GM10248 (cell line): ENCODE measurements at regions of chr1 and their contacts with region 1.

Region 1: DNA sequence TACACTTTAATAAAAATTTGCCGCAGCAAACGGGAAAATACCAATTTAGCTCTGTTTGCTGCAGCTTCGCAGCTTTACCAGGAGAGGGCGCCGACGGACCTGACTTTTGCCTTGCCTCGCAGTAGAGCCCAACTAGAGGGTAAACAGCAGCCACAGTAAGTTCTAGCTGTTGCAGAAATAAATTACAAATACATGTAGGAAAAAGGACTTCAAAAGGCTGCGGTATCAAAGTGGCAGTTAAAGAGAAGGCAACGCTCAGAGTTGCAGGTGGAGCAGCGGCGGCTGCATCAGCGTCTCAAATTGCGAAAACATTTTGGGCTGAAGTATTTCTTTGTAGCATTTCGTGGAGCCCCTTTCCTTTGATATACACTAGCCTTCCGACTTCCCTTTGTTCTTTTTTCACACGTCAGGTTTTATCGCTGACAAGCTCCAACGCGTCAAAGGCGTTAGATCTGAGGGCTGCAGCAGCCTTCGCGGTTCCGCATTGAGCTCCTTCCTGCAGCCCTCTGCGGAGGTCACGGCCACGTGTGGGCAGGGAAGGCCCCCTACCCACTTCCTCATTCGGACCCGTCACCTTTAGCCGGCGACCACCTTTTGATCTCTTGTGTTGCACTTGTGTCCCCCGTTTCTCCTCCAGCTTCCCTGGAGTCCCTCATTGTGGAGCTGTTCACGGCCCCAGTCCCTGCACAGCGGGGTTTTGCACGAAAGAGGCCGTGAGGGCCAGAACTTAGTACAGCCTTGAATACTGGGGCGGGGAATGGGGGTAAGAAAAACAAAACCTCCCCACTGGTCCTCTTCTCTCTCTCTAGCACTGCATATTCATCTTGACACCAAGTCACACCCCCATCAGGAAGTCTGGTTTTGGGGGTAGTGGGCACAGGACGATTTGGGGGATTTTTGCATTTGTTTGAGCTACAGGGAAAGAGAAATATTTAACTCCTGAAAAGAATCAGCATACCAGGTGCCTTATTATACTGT is 72.8 kb downstream of the S1PR1 start:
- DNase-seq: peak; percentile 53
- CTCF ChIP-seq: peak; percentile 93

Region 2: GRCh38 chr1:101025657-101026504 is 283.7 kb before region 1 on chr1 and contains the start of gene DPH5:
- CTCF ChIA-PET with region 1: no interaction called
- POLR2A ChIA-PET with region 1: no interaction called
- DNase-seq: peak; percentile 84
- CTCF ChIP-seq: no peak

Region 3: GRCh38 chr1:101288491-101288944 is 21.1 kb before region 1 on chr1:
- CTCF ChIA-PET with region 1: interaction called, 175 read pairs
- POLR2A ChIA-PET with region 1: no interaction called
- DNase-seq: peak; percentile 54
- CTCF ChIP-seq: peak; percentile 75

Region 4: GRCh38 chr1:101325144-101325543 is 15.5 kb after region 1 on chr1:
- CTCF ChIA-PET with region 1: interaction called, 53 read pairs
- POLR2A ChIA-PET with region 1: no interaction called
- DNase-seq: no peak
- CTCF ChIP-seq: no peak

Region 5: GRCh38 chr1:101344745-101345144 is 35.1 kb after region 1 on chr1:
- CTCF ChIA-PET with region 1: interaction called, 68 read pairs
- POLR2A ChIA-PET with region 1: no interaction called
- DNase-seq: no peak
- CTCF ChIP-seq: no peak

Region 6: DNA sequence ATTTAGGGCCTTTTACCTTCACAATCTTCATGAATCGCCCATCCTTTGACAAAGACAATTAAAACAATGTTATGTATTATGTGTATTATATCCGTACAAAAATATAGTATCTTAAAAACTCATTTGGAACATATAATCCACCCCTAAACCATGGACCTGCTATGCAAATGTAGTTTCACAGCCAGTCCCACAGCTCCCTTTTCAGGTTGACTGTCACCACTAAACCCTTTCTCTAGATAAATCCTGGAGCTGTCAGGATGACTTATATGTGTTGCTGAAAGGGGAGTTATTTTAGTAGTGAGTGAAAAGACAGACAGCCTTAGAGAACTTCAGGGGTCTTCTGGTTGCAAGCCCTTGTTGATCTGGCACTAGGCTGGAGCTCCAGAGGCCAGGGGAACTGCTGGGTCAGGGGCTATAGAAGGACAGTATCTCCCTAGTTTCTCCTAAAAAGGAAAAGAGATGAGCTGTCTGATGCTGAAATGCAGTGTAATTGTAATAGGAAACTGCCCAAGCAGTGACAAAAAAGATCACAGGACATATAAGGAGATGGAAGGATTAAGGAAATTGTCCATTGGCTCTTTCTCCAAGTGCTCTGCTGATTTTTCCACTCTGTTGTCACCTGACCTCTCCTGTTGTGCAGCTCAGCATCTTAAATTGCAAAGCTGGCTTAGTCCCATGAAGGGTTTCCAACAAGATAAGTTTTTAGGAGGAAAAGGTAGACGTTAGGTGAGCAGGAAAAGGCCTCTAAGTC is 54.9 kb after region 1 on chr1:
- CTCF ChIA-PET with region 1: interaction called, 58 read pairs
- POLR2A ChIA-PET with region 1: no interaction called
- DNase-seq: no peak
- CTCF ChIP-seq: no peak

Region 7: DNA sequence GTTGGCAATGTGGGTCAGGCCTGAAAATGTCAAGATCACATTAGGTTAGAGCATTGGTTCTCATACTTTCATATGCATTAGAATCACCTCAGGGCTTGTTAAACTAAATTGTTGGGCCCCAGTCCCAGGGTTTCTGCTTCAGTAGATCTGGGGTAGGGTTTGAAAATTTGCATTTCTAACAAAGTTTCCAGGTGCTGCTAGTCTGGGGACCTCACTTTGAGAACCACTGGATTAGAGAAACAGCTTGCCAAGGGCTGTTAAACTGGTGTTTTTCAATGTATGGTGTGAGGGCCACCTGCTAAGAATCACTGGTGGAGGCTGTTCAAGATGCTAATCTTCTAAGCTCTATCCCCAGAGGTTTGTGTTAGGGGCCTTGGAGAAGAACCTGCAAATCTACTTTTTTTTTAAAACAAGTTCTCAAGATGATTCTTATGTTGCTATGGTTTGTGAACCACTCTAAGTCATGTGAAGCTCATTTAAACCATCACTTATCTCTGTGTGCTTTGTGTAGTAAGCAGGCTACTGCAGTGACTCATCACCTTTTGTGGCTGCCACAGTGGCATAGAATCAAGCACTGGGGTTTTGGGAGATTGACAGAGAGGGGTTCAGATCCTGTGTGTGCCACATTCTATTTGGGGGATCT is 79.4 kb after region 1 on chr1:
- CTCF ChIA-PET with region 1: interaction called, 12 read pairs
- POLR2A ChIA-PET with region 1: no interaction called
- DNase-seq: peak; percentile 23
- CTCF ChIP-seq: no peak

Region 8: DNA sequence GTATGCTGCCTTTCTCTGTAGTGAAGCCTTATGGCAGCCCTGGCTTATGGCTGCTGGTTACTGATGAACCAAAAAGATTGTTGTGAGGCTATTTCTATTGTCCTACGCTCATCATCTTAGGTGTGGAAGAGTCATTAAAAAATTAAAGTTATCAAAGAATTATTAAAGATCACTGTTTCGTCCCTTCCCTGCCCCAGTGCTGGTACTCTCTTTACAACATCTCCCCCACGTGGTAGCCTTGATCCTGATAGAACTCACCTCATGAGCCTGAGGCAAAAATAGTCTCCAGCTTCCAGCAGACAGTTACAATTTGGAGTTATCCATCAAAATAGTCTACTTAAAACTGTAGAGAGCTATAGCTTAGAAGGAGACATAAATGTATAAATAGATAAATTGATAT is 128.7 kb after region 1 on chr1:
- CTCF ChIA-PET with region 1: interaction called, 52 read pairs
- POLR2A ChIA-PET with region 1: interaction called, 3 read pairs
- DNase-seq: peak; percentile 38
- CTCF ChIP-seq: peak; percentile 58

Region 9: GRCh38 chr1:101484689-101485338 is 175.2 kb after region 1 on chr1:
- CTCF ChIA-PET with region 1: no interaction called
- POLR2A ChIA-PET with region 1: no interaction called
- DNase-seq: no peak
- CTCF ChIP-seq: no peak